Right lobe of liver (tissue), 6 donors: ENCODE measurements at regions of chr11 and their contacts with region 1.

Region 1: GRCh38 chr11:75797792-75798191 is 17.2 kb upstream of the UVRAG start:
- DNase-seq: no peak
- ATAC-seq: no peak
- H3K4me3 ChIP-seq: no peak overlapping the region
- H3K27ac ChIP-seq: no peak overlapping the region
- H3K4me1 ChIP-seq: peaks cover 0 to 45% (median 18%) of the 10 kb centered on the region in 4 donors
- H3K27me3 ChIP-seq: no peaks in the 10 kb centered on the region
- CTCF ChIP-seq: no peak
- POLR2A ChIP-seq: no peak

Region 2: GRCh38 chr11:75654314-75654713 is 143.5 kb before region 1 on chr11:
- intact Hi-C with region 1: no loop called
- DNase-seq: no peak
- ATAC-seq: no peak
- H3K4me3 ChIP-seq: no peak overlapping the region
- H3K27ac ChIP-seq: no peak overlapping the region
- H3K4me1 ChIP-seq: no peaks in the 10 kb centered on the region
- H3K27me3 ChIP-seq: no peaks in the 10 kb centered on the region
- CTCF ChIP-seq: no peak
- POLR2A ChIP-seq: no peak

Region 3: DNA sequence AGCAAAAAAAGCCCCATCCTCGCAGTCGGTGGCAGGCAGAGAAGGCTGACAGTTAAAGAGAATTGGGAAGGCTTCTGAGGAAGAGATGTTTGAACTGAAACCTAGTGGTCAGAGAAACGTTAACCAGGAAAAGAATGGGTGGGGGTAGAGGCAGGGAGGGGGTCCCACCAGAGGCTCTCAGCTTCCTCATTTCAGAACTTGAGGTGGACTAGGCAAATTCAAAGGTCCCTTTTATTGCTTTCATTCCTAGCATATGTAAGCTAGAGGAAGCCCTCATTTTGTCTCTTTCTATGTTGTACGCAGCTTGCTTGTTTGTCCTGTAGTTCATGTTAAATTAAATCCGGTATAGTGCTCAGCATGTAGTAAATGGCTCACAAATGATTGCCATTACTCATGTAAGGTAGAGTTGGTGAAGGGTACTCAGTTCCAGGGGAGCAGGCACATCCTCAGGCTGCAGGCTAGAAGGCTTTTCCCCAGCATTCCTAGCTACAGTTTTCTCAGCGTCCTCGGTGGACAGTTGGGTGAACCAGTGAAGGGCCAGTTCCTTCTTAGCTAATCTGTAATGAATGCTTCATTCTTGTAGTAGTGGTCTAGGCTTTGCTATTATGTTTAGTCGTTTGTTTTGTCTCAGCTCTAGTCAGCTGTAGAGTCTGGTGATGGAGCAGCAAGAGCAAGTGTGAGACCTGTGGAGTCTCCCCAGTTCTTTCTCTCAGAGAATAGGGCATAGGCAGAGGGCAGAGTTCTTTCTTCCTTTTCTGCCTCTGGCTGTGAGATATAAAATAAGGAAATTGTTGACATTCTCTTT is 75.8 kb after region 1 on chr11:
- intact Hi-C with region 1: loop called (anchors 5 to 10 kb)
- DNase-seq: no peak
- ATAC-seq: peak in 2 of 4 donors; percentile 28 to 46
- H3K4me3 ChIP-seq: no peak overlapping the region
- H3K27ac ChIP-seq: no peak overlapping the region
- H3K4me1 ChIP-seq: peaks cover 0 to 10% (median 0%) of the 10 kb centered on the region in 4 donors
- H3K27me3 ChIP-seq: no peaks in the 10 kb centered on the region
- CTCF ChIP-seq: no peak
- POLR2A ChIP-seq: no peak